ENCODE measurements at regions of chr11 and their contacts with region 1.

Region 1: DNA sequence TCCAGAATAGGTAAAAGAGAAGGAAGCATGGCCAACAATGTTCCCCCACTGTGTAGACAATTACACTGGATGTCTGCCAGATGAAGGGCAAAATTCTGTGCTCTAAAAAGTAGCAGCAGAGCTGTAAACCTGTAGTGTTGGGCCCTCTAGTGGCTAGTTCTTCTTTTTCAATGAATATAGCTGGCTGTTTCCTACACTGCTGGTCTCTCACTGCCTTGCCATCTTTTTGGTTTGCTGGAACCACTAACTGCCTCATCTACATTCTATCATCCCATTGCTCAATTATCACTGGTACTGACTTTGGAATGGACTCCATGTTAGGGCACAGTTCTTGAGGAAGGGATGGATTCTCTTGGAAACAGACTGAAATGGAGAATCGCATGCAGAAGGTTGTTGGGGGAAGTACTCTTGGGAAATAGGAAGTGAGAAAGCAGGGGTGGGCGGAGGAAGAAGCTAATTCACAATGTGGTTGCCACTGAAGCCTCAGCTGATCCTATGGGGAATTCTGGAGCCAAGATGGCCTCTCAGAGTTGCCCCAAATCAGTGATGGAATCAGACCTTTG is 17.9 kb downstream of the KCNE3 start:
- DNase-seq: no peak
- H3K4me3 ChIP-seq: no peak overlapping the region
- H3K27ac ChIP-seq: no peak overlapping the region
- H3K4me1 ChIP-seq: peaks cover 0 to 7% (median 0%) of the 10 kb centered on the region in 4 donors
- H3K27me3 ChIP-seq: peaks cover 0 to 10% (median 0%) of the 10 kb centered on the region in 4 donors
- CTCF ChIP-seq: peak; percentile 69 to 78 (median 72)
- EP300 ChIP-seq: no peak
- POLR2A ChIP-seq: no peak

Region 2: GRCh38 chr11:74255741-74256369 is 193.6 kb before region 1 on chr11:
- intact Hi-C with region 1: loop called (anchors 2 kb)
- DNase-seq: peak; percentile 84
- H3K4me3 ChIP-seq: no peak overlapping the region
- H3K27ac ChIP-seq: no peak overlapping the region
- H3K4me1 ChIP-seq: peaks cover 0 to 24% (median 18%) of the 10 kb centered on the region in 4 donors
- H3K27me3 ChIP-seq: no peaks in the 10 kb centered on the region
- CTCF ChIP-seq: peak; percentile 92 to 94 (median 94)
- EP300 ChIP-seq: no peak
- POLR2A ChIP-seq: no peak

Region 3: DNA sequence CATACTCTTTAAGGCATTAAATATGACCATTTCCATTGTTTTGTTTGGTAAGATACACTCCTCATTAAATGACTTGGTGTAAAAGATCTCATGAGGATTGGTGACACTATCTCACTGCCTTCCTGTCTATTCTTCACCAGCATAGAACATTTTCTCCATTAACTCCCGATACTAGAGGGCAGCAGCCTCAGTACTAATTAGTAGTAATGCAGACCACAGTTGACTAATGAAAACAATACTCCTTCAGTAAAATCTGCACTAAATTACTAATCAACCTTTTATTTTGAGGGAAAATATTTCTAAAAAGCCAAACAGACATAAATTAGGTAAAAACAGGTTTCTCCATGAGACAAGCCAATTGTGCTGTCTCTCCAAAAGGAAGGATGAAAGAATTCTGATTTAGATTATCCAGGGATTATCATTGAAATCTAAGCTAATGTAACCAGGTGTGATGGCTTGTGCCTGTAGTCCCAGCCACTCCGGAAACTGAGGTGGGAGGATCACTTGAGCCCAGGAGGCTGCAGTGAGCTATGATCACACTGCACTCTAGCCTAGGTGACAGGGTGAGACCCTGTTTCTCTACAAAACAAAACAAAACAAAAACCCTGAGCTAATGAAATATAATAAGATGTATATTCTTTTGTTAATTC is 60.6 kb before region 1 on chr11:
- intact Hi-C with region 1: loop called (anchors 2 kb)
- DNase-seq: no peak
- H3K4me3 ChIP-seq: no peak overlapping the region
- H3K27ac ChIP-seq: no peak overlapping the region
- H3K4me1 ChIP-seq: peaks cover 0 to 7% (median 4%) of the 10 kb centered on the region in 4 donors
- H3K27me3 ChIP-seq: no peaks in the 10 kb centered on the region
- CTCF ChIP-seq: peak; percentile 68 to 76 (median 70)
- EP300 ChIP-seq: no peak
- POLR2A ChIP-seq: no peak

Region 4: DNA sequence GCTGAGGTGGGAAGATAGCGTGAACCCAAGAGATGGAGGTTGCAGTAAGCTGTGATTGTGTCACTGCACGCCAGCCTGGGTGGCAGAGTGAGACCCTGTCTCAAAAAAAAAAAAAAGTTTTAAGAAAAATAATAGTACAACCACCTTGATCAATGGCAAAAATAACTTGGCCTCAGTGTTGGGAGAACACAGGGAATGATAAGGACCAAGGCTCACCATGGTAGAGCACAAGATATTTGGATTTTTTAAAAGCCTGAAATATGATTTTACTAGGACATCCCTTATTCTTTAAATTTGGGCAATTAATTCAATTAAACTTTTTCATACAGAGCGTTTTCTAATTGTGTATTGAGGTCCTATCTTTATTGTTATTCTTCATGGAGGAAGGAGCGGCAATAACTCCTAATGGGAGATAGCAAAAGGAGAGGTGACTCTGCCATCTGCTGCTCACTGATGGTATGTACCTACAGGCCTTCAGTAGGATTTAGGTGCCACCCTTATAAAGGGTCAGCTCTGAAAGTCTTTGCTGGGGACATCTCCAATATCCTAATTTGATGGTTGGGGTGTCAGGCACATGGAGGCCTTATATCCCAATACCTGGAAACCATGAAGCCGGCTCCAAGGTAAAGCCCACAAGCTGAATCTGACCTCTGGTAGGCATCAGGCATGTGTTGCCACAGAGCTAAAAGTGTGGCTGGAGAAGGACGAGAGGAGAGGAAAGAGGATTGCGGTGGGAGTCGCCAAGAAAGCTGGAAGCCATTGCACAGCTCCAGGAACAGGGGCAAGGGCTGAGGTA is 121.0 kb after region 1 on chr11:
- intact Hi-C with region 1: loop called (anchors 5 kb)
- DNase-seq: no peak
- H3K4me3 ChIP-seq: no peak overlapping the region
- H3K27ac ChIP-seq: no peak overlapping the region
- H3K4me1 ChIP-seq: no peaks in the 10 kb centered on the region
- H3K27me3 ChIP-seq: peaks cover 0 to 3% (median 0%) of the 10 kb centered on the region in 4 donors
- CTCF ChIP-seq: peak; percentile 51 to 64 (median 54)
- EP300 ChIP-seq: no peak
- POLR2A ChIP-seq: no peak

Region 5: GRCh38 chr11:74739546-74740270 is 290.3 kb after region 1 on chr11:
- intact Hi-C with region 1: loop called (anchors 5 kb)
- DNase-seq: no peak
- H3K4me3 ChIP-seq: no peak overlapping the region
- H3K27ac ChIP-seq: no peak overlapping the region
- H3K4me1 ChIP-seq: peaks cover 0 to 18% (median 14%) of the 10 kb centered on the region in 4 donors
- H3K27me3 ChIP-seq: peaks cover 0 to under 1% (median 0%) of the 10 kb centered on the region in 4 donors
- CTCF ChIP-seq: peak; percentile 91 to 94 (median 93)
- EP300 ChIP-seq: no peak
- POLR2A ChIP-seq: no peak

Measured in esophagus muscularis mucosa (tissue), 4 donors.